GM10248 (cell line): ENCODE measurements at regions of chr5 and their contacts with region 1.

Region 1: GRCh38 chr5:72783354-72783753 is 33.1 kb upstream of the TNPO1 start:
- DNase-seq: no peak
- CTCF ChIP-seq: no peak

Region 2: DNA sequence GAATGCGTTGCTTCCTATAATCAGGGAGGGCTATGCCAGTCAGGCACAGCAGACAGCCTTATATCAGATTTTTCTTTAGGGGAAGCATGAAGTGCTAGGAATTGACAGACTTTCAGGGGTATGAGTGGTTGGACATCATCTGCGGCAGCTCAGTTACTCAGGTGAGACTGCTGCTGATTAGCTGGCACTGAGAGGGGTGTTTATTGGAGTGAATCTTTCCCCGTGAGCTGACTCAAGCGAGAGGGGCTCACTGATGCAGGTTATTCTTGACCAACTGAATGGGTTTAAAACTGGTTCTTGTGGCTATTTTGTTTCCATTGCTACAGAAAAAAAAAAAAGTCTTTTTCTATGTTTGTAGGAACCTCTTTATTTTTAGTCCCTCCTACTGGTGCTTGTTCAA is 13.1 kb before region 1 on chr5:
- CTCF ChIA-PET with region 1: interaction called, 13 read pairs
- POLR2A ChIA-PET with region 1: no interaction called
- DNase-seq: no peak
- CTCF ChIP-seq: no peak

Region 3: DNA sequence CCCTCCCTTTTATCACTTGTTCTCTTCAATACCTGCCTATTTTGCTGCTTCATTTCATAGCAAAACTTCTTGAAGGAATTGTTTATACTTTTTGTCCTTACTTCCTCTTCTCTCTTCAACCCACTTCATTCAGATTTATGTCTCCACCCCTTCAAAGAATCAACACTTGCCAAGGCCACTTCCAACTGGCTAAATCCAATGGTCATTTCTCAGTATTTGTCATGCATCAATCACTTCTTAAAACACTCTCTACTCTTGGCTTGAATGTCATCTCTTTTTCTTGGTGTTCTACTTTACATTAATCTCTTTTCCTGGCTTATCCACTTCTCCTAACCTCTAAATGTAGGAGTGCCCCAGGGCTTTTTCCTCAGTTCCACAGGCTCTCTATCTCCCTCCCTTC is 164.1 kb after region 1 on chr5:
- CTCF ChIA-PET with region 1: no interaction called
- POLR2A ChIA-PET with region 1: no interaction called
- DNase-seq: no peak
- CTCF ChIP-seq: no peak